Left ventricle myocardium inferior (tissue), 1 donor: ENCODE measurements at regions of chr10 and their contacts with region 1.

Region 1: GRCh38 chr10:97072851-97073665 is 112.7 kb downstream of the SLIT1 start:
- DNase-seq: peak; percentile 80
- H3K4me3 ChIP-seq: no peak overlapping the region
- H3K27ac ChIP-seq: no peak overlapping the region
- H3K4me1 ChIP-seq: no peaks in the 10 kb centered on the region
- H3K27me3 ChIP-seq: peaks cover 86% of the 10 kb centered on the region
- CTCF ChIP-seq: peak; percentile 95

Region 2: GRCh38 chr10:97207756-97208346 is 134.8 kb after region 1 on chr10:
- intact Hi-C with region 1: loop called (anchors 5 kb)
- DNase-seq: no peak
- H3K4me3 ChIP-seq: no peak overlapping the region
- H3K27ac ChIP-seq: no peak overlapping the region
- H3K4me1 ChIP-seq: no peaks in the 10 kb centered on the region
- H3K27me3 ChIP-seq: peaks cover 47% of the 10 kb centered on the region
- CTCF ChIP-seq: no peak